ENCODE measurements at regions of chr5 and their contacts with region 1.

Region 1: GRCh38 chr5:91383027-91383955 is at the start of gene ARRDC3:
- DNase-seq: peak; percentile 94

Region 2: DNA sequence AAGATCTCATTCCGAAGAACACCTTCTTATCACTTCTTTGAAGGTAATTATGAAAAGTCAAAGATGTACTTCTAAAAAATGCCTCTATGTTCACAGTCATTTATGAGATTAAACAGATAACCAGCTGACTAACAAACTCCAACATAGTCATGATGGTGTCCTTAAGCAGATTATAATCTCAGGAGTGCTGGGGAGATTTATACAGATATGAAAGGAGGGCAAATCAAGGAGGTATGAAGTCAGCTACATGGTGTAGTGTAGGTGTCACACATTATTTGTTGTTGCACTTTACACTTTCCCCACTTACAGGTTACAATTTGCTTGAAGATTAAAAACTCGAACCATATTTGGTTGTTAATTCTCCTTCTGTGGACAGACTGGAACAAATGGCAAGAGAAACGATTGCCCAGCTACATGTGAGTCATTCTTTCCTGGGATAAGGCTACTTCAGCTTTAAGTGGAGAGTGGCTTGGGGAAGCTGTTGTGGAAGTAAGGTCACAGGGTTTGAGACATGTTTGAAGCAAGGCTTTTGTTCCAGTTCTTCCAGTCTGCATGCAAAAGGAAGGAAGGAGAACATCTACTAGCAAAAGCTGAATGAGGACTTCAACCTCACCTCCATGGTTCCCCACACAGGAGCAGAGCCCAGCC is 504.6 kb before region 1 on chr5:
- in situ Hi-C with region 1: loop called (anchors 25 kb)
- DNase-seq: no peak

Region 3: DNA sequence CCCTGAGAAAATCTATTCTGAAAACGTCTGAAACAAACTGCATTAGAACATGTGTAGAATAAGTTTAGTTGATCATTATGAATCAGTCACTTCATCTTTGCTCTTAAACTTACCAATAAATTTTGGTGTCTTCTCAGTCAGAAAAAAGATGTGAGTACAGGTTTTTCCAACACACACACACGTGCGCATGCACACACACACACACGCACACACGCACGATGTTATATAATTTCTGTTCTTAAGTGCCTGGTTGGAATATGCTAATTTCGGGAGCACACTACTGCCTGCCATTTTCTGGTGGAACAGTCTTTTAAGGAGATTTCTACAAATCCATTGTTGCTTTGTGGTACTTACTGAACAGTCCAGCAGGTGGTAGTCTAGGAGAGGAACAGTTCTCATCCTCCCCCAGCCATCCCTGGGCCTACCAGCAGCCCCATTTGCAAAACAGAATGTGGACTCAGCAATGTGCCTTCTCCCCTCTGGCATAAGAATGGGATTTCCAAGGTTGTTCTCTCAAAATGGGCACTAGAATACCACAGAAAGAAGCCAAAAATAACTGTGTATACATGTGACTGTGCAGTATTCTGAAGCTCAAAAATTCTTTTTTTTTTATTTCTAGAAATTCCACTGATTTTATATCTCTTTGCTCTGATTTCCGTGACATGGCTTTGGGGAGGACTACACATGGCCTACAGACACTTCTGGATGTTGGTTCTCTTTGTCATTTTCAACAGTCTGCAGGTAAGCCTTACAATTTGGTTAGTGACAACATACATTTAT is 281.5 kb before region 1 on chr5:
- in situ Hi-C with region 1: loop called (anchors 25 kb)
- DNase-seq: peak; percentile 82